A673 (cell line): ENCODE measurements at regions of chrX and their contacts with region 1.

Region 1: GRCh38 chrX:153667956-153668396 is 5.6 kb downstream of the PNCK start:
- DNase-seq: peak; percentile 88
- H3K4me3 ChIP-seq: peak overlapping the region; percentile 38
- H3K27ac ChIP-seq: no peak overlapping the region
- H3K4me1 ChIP-seq: no peaks in the 10 kb centered on the region
- H3K27me3 ChIP-seq: no peaks in the 10 kb centered on the region
- CTCF ChIP-seq: peak; percentile 86

Region 2: GRCh38 chrX:152958524-152959465 is 709.2 kb before region 1 on chrX:
- CTCF ChIA-PET with region 1: no interaction called
- POLR2A ChIA-PET with region 1: no interaction called
- intact Hi-C with region 1: loop called (anchors 5 kb)
- DNase-seq: peak; percentile 91
- H3K4me3 ChIP-seq: no peak overlapping the region
- H3K27ac ChIP-seq: no peak overlapping the region
- H3K4me1 ChIP-seq: no peaks in the 10 kb centered on the region
- H3K27me3 ChIP-seq: no peaks in the 10 kb centered on the region
- CTCF ChIP-seq: peak; percentile 89

Region 3: GRCh38 chrX:153032397-153033118 is 635.4 kb before region 1 on chrX:
- CTCF ChIA-PET with region 1: no interaction called
- POLR2A ChIA-PET with region 1: no interaction called
- intact Hi-C with region 1: loop called (anchors 10 kb)
- DNase-seq: peak; percentile 60
- H3K4me3 ChIP-seq: peak overlapping the region; percentile 31
- H3K27ac ChIP-seq: no peak overlapping the region
- H3K4me1 ChIP-seq: no peaks in the 10 kb centered on the region
- H3K27me3 ChIP-seq: no peaks in the 10 kb centered on the region
- CTCF ChIP-seq: peak; percentile 79

Region 4: GRCh38 chrX:153539171-153539978 is 128.6 kb before region 1 on chrX:
- CTCF ChIA-PET with region 1: interaction called, 17 read pairs
- POLR2A ChIA-PET with region 1: no interaction called
- intact Hi-C with region 1: no loop called
- DNase-seq: peak; percentile 58
- H3K4me3 ChIP-seq: no peak overlapping the region
- H3K27ac ChIP-seq: no peak overlapping the region
- H3K4me1 ChIP-seq: no peaks in the 10 kb centered on the region
- H3K27me3 ChIP-seq: no peaks in the 10 kb centered on the region
- CTCF ChIP-seq: peak; percentile 92

Region 5: GRCh38 chrX:153554519-153555167 is 113.3 kb before region 1 on chrX:
- CTCF ChIA-PET with region 1: interaction called, 8 read pairs
- POLR2A ChIA-PET with region 1: no interaction called
- intact Hi-C with region 1: loop called (anchors 2 kb)
- DNase-seq: peak; percentile 71
- H3K4me3 ChIP-seq: no peak overlapping the region
- H3K27ac ChIP-seq: no peak overlapping the region
- H3K4me1 ChIP-seq: no peaks in the 10 kb centered on the region
- H3K27me3 ChIP-seq: no peaks in the 10 kb centered on the region
- CTCF ChIP-seq: peak; percentile 79

Region 6: GRCh38 chrX:153609917-153610428 is 58.0 kb before region 1 on chrX:
- CTCF ChIA-PET with region 1: interaction called, 5 read pairs
- POLR2A ChIA-PET with region 1: no interaction called
- intact Hi-C with region 1: loop called (anchors 1 kb)
- DNase-seq: peak; percentile 80
- H3K4me3 ChIP-seq: peak overlapping the region; percentile 35
- H3K27ac ChIP-seq: no peak overlapping the region
- H3K4me1 ChIP-seq: no peaks in the 10 kb centered on the region
- H3K27me3 ChIP-seq: peaks cover 29% of the 10 kb centered on the region
- CTCF ChIP-seq: peak; percentile 85

Region 7: GRCh38 chrX:153646620-153647373 is 21.2 kb before region 1 on chrX and contains the start of gene DUSP9:
- CTCF ChIA-PET with region 1: interaction called, 10 read pairs
- POLR2A ChIA-PET with region 1: no interaction called
- intact Hi-C with region 1: loop called (anchors 1 kb)
- DNase-seq: peak; percentile 38
- H3K4me3 ChIP-seq: no peak within 1 kb of the TSS
- H3K27ac ChIP-seq: no peak within 1 kb of the TSS
- H3K4me1 ChIP-seq: no peaks in the 10 kb centered on the region
- H3K27me3 ChIP-seq: peaks cover 26% of the 10 kb centered on the region
- CTCF ChIP-seq: no peak
- total RNA-seq, gene DUSP9: 0.92 and 1.4 TPM in 2 replicates

Region 8: GRCh38 chrX:153735274-153735673 is 67.3 kb after region 1 on chrX:
- CTCF ChIA-PET with region 1: no interaction called
- POLR2A ChIA-PET with region 1: no interaction called
- intact Hi-C with region 1: no loop called
- DNase-seq: no peak
- H3K4me3 ChIP-seq: no peak overlapping the region
- H3K27ac ChIP-seq: no peak overlapping the region
- H3K4me1 ChIP-seq: no peaks in the 10 kb centered on the region
- H3K27me3 ChIP-seq: no peaks in the 10 kb centered on the region
- CTCF ChIP-seq: no peak

Region 9: DNA sequence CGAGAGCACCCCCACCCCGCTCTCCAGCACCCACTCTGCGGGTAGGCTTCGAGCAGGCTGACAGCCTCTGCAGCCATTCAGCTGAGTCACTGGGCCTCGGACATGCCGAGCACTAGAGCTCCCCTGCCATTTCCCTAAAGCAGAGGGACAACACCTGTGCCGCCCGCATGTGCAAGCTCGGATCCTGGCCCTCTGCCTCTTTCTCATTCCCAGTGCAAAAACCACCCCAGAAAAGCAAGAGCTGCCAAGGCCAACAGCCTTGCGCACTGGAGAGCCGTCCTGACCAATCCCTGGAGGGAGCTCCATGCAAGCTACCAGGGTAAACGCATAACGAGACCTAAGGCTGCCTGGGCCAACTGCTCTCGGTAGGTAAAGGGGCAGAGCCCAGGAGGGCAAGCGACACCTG is 298.3 kb after region 1 on chrX:
- CTCF ChIA-PET with region 1: no interaction called
- POLR2A ChIA-PET with region 1: no interaction called
- intact Hi-C with region 1: no loop called
- DNase-seq: no peak
- H3K4me3 ChIP-seq: no peak overlapping the region
- H3K27ac ChIP-seq: peak overlapping the region; percentile 16
- H3K4me1 ChIP-seq: peaks cover 19% of the 10 kb centered on the region
- H3K27me3 ChIP-seq: no peaks in the 10 kb centered on the region
- CTCF ChIP-seq: no peak